Body of pancreas (tissue), 4 donors: ENCODE measurements at regions of chr17 and their contacts with region 1.

Region 1: DNA sequence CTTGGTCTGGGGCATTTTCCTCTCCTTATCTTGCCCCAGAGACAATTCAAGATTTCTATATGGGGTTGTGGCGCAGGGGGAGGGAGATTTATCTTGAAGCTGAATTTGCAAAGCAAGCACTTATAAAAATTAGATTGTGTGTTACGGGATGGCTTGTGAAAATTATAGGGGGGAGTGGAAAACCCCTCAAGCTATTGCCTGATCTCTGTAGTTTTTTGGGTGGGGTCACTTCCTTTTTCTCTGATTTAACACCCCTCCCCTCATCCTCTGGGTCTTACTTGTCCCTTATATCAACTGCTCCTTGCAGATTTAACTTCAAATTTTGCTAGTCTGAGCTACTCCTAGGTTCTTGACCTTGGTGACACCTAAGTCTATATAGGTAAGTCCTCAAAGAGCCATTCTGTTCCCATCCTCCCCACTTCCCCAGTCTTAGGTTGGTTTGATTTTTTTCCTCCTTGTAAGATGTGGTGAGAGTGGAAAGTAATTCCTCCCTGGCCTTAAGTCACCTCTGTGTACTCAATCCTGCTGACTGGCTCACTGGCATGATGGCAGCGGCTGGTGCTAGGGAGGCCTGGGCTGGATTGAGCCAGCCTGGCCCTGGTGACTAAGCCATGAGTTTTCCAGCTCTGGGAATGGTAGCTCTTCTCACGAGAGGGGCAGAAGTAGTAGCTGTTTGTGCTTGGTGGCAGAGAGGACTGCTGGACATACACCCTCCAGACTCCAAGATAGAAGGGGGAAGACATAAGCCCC is 2.3 kb downstream of the ARL4D start:
- DNase-seq: peak in 1 of 4 donors; percentile 41
- ATAC-seq: no peak
- H3K4me3 ChIP-seq: no peak overlapping the region
- H3K27ac ChIP-seq: no peak overlapping the region
- H3K4me1 ChIP-seq: peaks cover 17% of the 10 kb centered on the region
- H3K27me3 ChIP-seq: no peaks in the 10 kb centered on the region
- CTCF ChIP-seq: no peak
- POLR2A ChIP-seq: no peak

Region 2: GRCh38 chr17:42517516-42517915 is 883.6 kb before region 1 on chr17:
- intact Hi-C with region 1: no loop called
- DNase-seq: peak; percentile 73 to 85 (median 82)
- ATAC-seq: peak; percentile 64
- H3K4me3 ChIP-seq: no peak overlapping the region
- H3K27ac ChIP-seq: peak overlapping the region; percentile 41 to 80 (median 70)
- H3K4me1 ChIP-seq: peaks cover 40% of the 10 kb centered on the region
- H3K27me3 ChIP-seq: no peaks in the 10 kb centered on the region
- CTCF ChIP-seq: peak; percentile 76 to 89 (median 87)
- POLR2A ChIP-seq: no peak

Region 3: DNA sequence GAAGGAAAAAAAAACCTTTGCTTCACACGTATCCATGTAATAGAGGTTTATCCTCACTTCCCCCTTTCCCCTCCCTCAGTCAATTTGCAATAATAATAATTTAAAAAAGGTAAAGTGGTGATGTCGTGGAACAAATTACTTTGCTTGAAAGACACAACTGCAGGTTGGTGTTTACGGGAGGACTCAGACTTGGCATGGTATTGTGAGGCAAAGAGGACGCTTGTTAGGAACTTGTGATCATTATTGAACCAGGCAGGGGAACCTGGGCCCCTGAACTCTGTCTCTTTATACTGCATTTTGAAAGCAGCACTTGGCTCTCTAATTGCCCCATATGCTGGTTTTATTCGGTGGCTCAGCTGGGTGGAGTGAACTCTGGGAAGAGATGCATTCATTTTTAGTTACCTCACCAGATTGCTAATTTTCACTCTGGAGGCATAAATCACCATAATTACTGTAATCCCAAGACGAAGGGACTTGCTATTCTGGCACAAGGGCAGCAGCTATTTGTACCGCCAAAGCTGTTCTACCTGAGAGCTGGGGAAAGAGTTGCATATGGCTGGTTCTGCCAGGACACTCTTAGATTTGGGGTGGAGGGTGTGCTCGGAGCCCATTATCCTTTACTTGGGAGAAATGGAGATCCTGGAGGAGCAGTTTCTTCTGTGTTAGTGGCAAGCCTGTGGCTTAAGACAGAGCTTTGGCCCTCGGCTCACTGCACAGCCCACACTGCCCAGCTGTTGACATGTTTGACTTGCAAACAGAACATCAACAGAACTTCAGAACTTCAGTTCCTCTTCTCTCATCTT is 76.9 kb after region 1 on chr17:
- intact Hi-C with region 1: loop called (anchors 5 kb)
- DNase-seq: no peak
- ATAC-seq: no peak
- H3K4me3 ChIP-seq: no peak overlapping the region
- H3K27ac ChIP-seq: no peak overlapping the region
- H3K4me1 ChIP-seq: peaks cover 9% of the 10 kb centered on the region
- H3K27me3 ChIP-seq: no peaks in the 10 kb centered on the region
- CTCF ChIP-seq: no peak
- POLR2A ChIP-seq: no peak

Region 4: DNA sequence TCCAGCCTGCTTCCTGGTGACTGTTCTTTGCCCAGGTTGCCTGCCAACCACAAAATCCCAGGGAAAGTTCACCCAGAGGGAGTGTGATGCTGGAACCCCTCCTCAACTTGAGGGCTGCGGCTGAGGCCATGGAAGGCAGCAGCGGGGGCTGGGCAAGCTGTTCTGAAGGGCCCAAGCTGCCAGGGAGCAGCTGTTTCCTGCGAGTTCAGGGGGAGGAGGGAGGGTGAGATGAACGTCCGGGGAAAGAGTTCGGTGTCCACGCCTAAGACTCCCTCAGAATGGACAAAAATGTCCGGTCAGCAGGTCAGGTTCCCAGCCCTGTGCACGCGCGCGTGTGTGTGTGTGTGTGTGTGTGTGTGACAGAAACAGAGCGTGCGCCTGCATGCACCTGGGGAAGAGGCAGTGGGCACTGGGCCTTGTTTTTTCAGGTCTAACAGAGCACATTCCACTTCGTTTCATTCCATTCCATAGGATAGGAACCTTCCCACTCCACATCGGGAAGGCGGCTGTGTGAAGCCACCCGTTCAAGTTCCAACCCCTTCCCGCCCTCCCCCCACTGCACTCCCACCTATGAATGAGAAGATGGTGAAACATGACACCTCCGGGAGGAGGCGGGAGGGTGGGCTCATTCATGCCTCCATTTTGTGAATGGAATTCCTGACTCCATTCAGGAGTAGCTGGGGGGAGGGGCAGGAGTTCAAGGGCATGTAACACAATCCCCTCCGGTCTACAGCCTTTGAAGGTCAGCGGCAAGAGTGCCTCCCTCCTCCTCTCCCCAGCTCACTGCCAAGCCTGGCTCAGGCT is 129.4 kb after region 1 on chr17:
- intact Hi-C with region 1: no loop called
- DNase-seq: peak; percentile 75 to 91 (median 90)
- ATAC-seq: peak; percentile 71
- H3K4me3 ChIP-seq: no peak overlapping the region
- H3K27ac ChIP-seq: peak overlapping the region; percentile 64 to 83 (median 78)
- H3K4me1 ChIP-seq: peaks cover 39% of the 10 kb centered on the region
- H3K27me3 ChIP-seq: no peaks in the 10 kb centered on the region
- CTCF ChIP-seq: no peak
- POLR2A ChIP-seq: peak in 2 of 3 donors; percentile 33 to 37